Activated T-helper 1 cell treated with anti-CD3 and anti-CD28 coated beads, Interleukin-12 subunit alpha, Interleukin-12 subunit beta, Interleukin-2, Interleukin-4 antibody, amounts not matched to agents 30 ng/mL and 10 ng/mL and 1 ng/mL, durations not matched to agents 14 hours and 24 hours and 36 hours (primary cell): ENCODE measurements at regions of chr11 and their contacts with region 1.

Region 1: GRCh38 chr11:13183094-13183825 is 94.3 kb upstream of the BMAL1 start:
- DNase-seq: no peak
- H3K4me3 Mint-ChIP-seq: no peak overlapping the region
- H3K27ac Mint-ChIP-seq: no peak overlapping the region
- H3K4me1 Mint-ChIP-seq: peaks cover 9% of the 10 kb centered on the region
- H3K27me3 Mint-ChIP-seq: peaks cover 9% of the 10 kb centered on the region

Region 2: DNA sequence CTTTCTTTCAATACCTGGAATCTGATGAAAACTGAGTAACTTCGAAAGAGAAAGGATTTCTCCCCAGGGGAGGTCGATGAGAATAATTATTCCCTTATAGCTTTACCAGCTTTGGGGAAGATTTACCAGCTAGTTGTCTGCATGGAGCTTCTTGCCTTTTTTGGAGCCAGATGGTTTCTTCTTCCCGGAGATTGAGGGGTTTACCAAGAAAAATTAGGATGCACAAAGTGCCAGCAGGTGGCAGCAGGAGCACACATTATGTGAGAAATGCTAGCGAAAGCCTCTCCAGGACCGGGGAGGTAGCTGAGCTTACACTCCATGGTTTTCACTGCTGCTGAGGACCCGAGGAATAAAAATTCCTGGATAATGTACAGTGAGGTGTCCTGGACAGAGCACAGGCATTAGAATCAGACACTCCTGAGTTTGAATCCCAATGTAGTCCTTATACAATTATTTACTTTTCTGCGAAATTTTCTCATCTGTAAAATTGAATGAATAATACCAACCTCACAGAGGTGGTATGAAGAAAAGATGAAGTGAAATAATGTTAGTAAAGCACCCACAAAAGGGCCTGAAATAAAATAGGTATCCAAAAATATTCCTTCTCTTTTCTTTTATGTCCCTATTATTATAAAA is 851.9 kb before region 1 on chr11:
- intact Hi-C with region 1: loop called (anchors 5 kb)
- DNase-seq: peak; percentile 48
- H3K4me3 Mint-ChIP-seq: no peak overlapping the region
- H3K27ac Mint-ChIP-seq: no peak overlapping the region
- H3K4me1 Mint-ChIP-seq: peaks cover 6% of the 10 kb centered on the region
- H3K27me3 Mint-ChIP-seq: peaks cover 1% of the 10 kb centered on the region

Region 3: DNA sequence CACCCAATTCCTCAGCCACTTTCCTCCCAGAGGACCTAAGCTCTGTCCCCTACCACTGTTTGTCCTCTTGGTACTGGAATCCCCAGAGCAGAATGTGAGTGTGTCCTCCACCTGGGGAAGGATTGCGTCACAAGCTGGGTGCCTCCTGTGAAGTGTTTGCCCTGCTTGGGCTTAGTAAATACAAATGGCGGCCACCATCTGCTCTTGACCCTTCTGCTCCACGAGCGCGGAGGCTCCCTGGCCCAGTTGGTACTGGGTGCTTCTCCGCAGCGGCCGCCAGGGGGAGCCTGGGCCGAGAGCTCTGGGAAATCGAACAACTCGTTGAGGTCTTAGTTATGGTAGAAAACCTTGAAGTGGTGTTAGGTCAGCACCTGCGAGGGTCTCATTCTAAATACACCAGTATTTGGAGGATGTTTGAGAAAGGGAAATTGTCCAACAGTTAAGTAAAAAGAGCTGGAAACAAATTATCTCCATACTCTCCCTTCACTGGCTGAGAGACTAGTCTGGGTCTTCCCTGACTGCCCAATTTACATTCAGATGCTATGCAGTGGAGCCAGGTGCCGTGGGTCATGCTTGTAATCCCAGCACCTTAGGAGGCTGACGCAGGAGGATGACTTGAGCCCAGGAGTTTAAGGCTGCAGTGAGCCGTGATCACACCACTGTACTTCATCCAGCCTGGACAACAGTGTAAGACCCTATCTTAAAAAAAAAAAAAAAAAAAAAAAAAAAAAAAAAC is 583.7 kb before region 1 on chr11:
- intact Hi-C with region 1: loop called (anchors 5 kb)
- DNase-seq: peak; percentile 22
- H3K4me3 Mint-ChIP-seq: no peak overlapping the region
- H3K27ac Mint-ChIP-seq: no peak overlapping the region
- H3K4me1 Mint-ChIP-seq: no peaks in the 10 kb centered on the region
- H3K27me3 Mint-ChIP-seq: peaks cover 6% of the 10 kb centered on the region

Region 4: GRCh38 chr11:12963792-12964536 is 219.3 kb before region 1 on chr11:
- intact Hi-C with region 1: loop called (anchors 1 kb)
- DNase-seq: peak; percentile 21
- H3K4me3 Mint-ChIP-seq: no peak overlapping the region
- H3K27ac Mint-ChIP-seq: no peak overlapping the region
- H3K4me1 Mint-ChIP-seq: no peaks in the 10 kb centered on the region
- H3K27me3 Mint-ChIP-seq: peaks cover 15% of the 10 kb centered on the region

Region 5: DNA sequence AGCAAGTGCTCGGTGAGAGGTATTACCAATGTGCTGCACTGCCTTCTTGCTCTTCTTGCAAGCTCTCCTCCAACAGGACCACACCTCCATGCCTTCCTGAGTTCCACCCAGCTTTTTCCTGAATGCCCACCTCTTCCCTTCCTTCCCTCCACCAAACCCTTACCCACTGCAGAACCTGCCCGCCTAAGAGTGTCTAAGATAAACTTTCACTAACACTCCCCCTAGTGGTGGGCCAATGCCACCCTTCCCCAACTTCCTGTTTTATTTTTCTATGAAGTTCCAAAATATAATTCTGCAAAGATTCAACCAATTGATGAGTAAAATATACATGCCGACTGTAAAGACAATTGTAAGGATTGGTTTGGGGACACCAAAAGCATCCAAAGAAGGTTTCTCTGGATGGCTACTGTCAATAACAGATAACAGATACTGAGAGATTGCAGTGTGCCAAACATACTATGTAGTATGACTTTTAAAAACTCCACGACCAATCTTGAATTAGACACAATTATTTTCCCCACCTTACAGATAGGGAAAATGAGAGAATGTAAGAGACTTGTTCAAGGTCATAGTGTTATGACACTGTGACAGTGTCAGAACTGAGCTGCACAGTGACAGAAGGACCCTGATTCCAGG is 55.7 kb after region 1 on chr11:
- intact Hi-C with region 1: loop called (anchors 1 kb)
- DNase-seq: peak; percentile 21
- H3K4me3 Mint-ChIP-seq: no peak overlapping the region
- H3K27ac Mint-ChIP-seq: no peak overlapping the region
- H3K4me1 Mint-ChIP-seq: no peaks in the 10 kb centered on the region
- H3K27me3 Mint-ChIP-seq: peaks cover 23% of the 10 kb centered on the region

Region 6: DNA sequence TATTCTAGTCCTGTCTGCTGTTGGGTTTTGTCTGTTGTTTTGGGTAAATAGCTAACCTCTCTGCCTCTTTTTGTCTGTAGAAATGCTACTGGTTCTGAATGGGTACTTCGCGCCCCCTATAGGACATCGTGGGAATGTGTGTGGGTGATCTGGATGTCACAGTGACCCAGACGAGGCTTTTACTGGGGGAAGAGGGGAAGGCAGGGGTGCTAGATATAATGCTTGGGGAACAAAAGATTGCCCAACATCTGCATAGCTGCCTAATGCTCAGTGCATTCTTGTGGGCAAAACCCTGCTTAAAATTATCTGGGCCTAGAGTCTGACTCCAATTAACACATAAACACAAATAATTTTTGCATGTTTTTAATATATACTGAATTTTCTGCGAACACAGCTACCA is 152.1 kb after region 1 on chr11:
- intact Hi-C with region 1: loop called (anchors 2 kb)
- DNase-seq: peak; percentile 58
- H3K4me3 Mint-ChIP-seq: no peak overlapping the region
- H3K27ac Mint-ChIP-seq: peak overlapping the region; percentile 25
- H3K4me1 Mint-ChIP-seq: peaks cover 56% of the 10 kb centered on the region
- H3K27me3 Mint-ChIP-seq: no peaks in the 10 kb centered on the region

Region 7: DNA sequence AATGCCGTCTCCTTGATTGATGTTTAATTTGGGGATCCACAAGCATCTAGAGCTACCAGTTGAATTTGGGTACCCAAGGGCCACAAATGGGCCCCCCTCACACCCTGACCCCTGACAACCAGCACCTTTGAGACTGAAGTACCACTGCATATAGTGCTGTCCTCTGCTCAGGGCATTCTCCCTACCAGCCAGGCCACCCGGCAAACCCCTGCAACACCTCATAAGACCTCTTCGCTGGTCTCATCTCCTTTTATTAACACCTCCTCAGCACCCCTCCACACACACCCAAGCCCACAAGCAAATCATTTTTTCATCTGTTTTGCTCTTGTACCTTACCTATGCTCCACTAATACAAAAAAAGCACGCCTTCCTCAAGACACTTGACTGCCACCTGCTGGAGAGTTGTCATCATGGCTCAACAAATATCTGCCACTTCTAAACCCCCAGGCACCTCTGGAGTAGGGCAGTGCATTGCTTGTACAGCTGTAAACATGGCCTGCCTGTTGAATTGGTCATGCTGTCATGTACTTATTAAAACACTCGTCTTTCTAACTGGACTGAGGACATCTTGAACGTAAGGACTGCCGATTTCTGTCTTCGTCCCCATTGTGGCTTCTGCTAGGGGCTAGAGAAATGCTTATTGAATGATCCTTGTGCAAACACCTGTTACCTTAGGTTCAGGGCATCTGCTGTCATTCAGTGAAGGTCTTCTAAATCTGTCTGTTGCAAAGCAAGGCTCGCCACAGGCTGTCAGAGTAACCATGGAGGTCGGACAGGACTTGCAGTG is 160.9 kb after region 1 on chr11:
- intact Hi-C with region 1: loop called (anchors 1 kb)
- DNase-seq: peak; percentile 53
- H3K4me3 Mint-ChIP-seq: no peak overlapping the region
- H3K27ac Mint-ChIP-seq: peak overlapping the region; percentile 29
- H3K4me1 Mint-ChIP-seq: peaks cover 41% of the 10 kb centered on the region
- H3K27me3 Mint-ChIP-seq: no peaks in the 10 kb centered on the region

Region 8: GRCh38 chr11:13368041-13368446 is 184.8 kb after region 1 on chr11:
- intact Hi-C with region 1: no loop called
- DNase-seq: no peak
- H3K4me3 Mint-ChIP-seq: no peak overlapping the region
- H3K27ac Mint-ChIP-seq: no peak overlapping the region
- H3K4me1 Mint-ChIP-seq: no peaks in the 10 kb centered on the region
- H3K27me3 Mint-ChIP-seq: no peaks in the 10 kb centered on the region